ENCODE measurements at regions of chr12 and their contacts with region 1.

Region 1: DNA sequence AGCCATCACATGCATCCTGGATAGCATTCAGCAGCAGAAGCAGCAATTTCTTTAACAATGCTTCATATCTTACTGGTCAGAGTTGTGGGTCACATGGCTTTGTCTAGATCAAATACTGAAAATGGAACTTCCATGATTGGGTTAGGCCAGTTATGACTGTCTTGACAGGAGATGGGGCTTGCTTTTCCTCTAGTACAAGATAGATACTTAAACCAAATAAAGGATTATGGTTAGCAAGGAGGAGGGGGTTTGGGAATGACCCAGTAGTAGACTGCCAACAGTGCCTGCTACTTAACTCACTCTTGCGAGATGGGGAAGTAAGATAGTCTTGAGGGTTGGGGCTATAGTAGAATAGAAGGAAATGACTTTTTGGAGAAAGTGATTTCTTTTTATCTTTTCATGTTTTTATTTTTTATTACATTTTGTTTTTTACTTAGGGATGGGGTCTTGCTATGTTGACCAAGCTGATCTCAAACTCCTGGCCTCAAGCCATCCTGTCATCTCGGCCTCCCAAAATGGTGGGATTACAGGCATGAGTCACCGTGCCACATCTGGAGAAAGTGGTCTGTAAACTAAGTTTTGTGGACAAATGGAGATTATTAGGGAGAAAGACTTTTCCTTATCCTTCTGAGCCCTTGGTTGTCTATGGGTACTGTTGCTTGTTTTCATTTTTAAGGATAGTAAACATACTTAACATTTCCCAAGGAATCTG is 37.6 kb downstream of the WNK1 start:
- DNase-seq: no peak
- ATAC-seq: peak; percentile 49
- H3K4me3 ChIP-seq: no peak overlapping the region
- H3K4me3 Mint-ChIP-seq: peak overlapping the region in 7 of 10 donors; percentile 33 to 66 (median 46)
- H3K27ac ChIP-seq: no peak overlapping the region
- H3K27ac Mint-ChIP-seq: peak overlapping the region in 8 of 9 donors; percentile 39 to 88 (median 78)
- H3K4me1 ChIP-seq: peaks cover 32 to 39% of the 10 kb centered on the region in 2 donors
- H3K4me1 Mint-ChIP-seq: peaks cover 53 to 97% (median 89%) of the 10 kb centered on the region in 7 donors
- H3K27me3 ChIP-seq: no peaks in the 10 kb centered on the region
- H3K27me3 Mint-ChIP-seq: no peaks in the 10 kb centered on the region

Region 2: GRCh38 chr12:774051-774614 is 15.9 kb before region 1 on chr12:
- CTCF ChIA-PET with region 1: interaction called, 4 read pairs
- POLR2A ChIA-PET with region 1: no interaction called
- intact Hi-C with region 1: loop called in 1 of 2 experiments (anchors 1 kb)
- DNase-seq: no peak
- ATAC-seq: no peak
- H3K4me3 ChIP-seq: no peak overlapping the region
- H3K4me3 Mint-ChIP-seq: peak overlapping the region in 9 of 10 donors; percentile 14 to 63 (median 34)
- H3K27ac ChIP-seq: peak overlapping the region; percentile 11
- H3K27ac Mint-ChIP-seq: peak overlapping the region in 8 of 9 donors; percentile 60 to 88 (median 74)
- H3K4me1 ChIP-seq: peaks cover 39 to 53% of the 10 kb centered on the region in 2 donors
- H3K4me1 Mint-ChIP-seq: peaks cover 38 to 96% (median 91%) of the 10 kb centered on the region in 7 donors
- H3K27me3 ChIP-seq: no peaks in the 10 kb centered on the region
- H3K27me3 Mint-ChIP-seq: no peaks in the 10 kb centered on the region

Region 3: DNA sequence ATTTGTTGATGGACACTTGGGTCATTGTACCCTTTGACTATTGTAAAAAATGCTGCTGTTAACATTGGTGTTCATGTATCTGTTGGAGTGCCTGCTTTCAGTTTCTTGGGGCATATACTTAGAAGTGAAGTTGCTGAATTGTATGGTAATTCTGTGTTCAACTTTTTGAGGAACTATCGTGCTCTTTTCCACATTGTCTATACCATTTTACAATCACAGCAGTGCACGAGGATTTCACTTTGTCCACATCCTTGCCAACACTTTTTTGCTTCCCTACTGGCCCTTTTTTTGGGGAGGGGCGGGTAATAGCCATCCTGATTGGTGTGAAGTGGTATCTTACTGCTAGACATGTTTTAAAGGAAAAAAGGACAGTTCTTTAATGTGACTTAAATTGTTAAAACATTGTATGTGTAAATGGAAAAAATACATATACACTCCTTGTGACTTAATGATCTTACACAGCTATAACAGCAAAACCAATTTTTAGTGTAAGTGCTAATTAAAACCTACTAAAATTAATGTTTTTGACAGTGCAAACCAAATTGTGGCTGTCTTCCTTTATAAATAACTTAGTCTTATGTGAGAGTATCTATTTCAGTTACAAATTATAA is 15.1 kb after region 1 on chr12:
- CTCF ChIA-PET with region 1: no interaction called
- POLR2A ChIA-PET with region 1: interaction called, 9 read pairs
- intact Hi-C with region 1: loop called in 1 of 2 experiments (anchors 2 kb)
- DNase-seq: no peak
- ATAC-seq: peak; percentile 44
- H3K4me3 ChIP-seq: no peak overlapping the region
- H3K4me3 Mint-ChIP-seq: peak overlapping the region in 4 of 10 donors; percentile 20 to 44 (median 26)
- H3K27ac ChIP-seq: no peak overlapping the region
- H3K27ac Mint-ChIP-seq: peak overlapping the region in 7 of 9 donors; percentile 16 to 90 (median 59)
- H3K4me1 ChIP-seq: peaks cover 45% of the 10 kb centered on the region in 2 donors
- H3K4me1 Mint-ChIP-seq: peaks cover 51 to 94% (median 85%) of the 10 kb centered on the region in 7 donors
- H3K27me3 ChIP-seq: no peaks in the 10 kb centered on the region
- H3K27me3 Mint-ChIP-seq: no peaks in the 10 kb centered on the region